ENCODE measurements at regions of chr21 and their contacts with region 1.

Region 1: GRCh38 chr21:14259747-14260146 is 43.8 kb downstream of the RBM11 start:
- ATAC-seq: peak; percentile 72 to 92 (median 82)
- H3K4me3 ChIP-seq: no peak overlapping the region
- H3K27ac ChIP-seq: no peak overlapping the region
- H3K4me1 ChIP-seq: no peaks in the 10 kb centered on the region

Region 2: DNA sequence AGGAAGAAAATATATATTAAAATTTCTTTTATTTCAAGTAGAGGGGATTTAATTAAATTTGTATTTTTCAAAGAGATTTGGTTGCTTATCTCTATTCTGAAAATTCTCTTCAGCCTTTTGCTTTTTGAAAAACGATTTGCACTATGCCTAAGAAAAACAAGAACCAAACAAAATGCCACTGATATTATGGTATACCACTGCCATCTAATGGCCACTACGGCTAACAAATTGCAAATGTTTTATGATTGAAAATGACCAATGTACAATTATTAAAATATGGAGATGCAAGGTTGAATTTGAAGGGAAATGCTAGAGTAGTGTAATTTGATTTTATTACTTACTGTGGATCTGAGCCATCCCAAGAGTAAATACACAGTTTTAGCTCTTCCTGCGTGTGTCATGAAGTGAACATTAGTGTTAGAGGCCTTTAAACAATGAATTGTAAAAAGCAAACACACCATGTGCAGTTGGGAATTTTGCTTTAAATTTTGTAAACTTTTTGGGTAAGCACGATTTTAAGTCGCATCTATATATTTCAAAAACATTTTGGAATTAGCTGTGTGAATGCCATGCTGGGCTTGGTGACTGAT is 1332.6 kb after region 1 on chr21:
- in situ Hi-C with region 1: loop called in 3 of 9 experiments (anchors 25 kb)
- ATAC-seq: peak in 2 of 8 experiments; percentile 34 to 68
- H3K4me3 ChIP-seq: no peak overlapping the region
- H3K27ac ChIP-seq: no peak overlapping the region
- H3K4me1 ChIP-seq: no peaks in the 10 kb centered on the region

Measured in motor neuron (in vitro differentiated cells).